ENCODE measurements at regions of chr2 and their contacts with region 1.

Region 1: DNA sequence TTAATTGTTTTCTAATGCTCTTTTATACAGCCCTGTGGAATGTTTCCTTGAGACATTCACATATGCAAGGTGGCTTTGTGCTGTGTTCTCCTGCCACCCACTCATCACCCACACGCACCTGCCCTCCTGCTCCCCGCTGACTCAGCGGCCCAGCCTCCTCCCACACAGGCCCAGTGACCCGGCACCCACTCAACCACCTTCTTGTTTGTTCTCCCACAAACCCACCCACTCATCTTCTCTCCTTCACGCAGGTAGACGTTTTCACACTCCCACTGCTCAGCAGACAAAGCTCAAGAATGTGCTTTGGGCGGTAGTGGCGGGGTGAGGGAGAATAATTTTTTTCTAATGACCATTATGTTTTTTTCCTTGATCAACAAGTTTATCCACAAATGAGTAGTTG is 28.6 kb upstream of the NEMP2 start:
- DNase-seq: no peak
- H3K4me3 ChIP-seq: no peak overlapping the region
- H3K27ac ChIP-seq: no peak overlapping the region
- H3K4me1 ChIP-seq: no peaks in the 10 kb centered on the region
- H3K27me3 ChIP-seq: no peaks in the 10 kb centered on the region
- CTCF ChIP-seq: no peak
- POLR2A ChIP-seq: no peak

Region 2: DNA sequence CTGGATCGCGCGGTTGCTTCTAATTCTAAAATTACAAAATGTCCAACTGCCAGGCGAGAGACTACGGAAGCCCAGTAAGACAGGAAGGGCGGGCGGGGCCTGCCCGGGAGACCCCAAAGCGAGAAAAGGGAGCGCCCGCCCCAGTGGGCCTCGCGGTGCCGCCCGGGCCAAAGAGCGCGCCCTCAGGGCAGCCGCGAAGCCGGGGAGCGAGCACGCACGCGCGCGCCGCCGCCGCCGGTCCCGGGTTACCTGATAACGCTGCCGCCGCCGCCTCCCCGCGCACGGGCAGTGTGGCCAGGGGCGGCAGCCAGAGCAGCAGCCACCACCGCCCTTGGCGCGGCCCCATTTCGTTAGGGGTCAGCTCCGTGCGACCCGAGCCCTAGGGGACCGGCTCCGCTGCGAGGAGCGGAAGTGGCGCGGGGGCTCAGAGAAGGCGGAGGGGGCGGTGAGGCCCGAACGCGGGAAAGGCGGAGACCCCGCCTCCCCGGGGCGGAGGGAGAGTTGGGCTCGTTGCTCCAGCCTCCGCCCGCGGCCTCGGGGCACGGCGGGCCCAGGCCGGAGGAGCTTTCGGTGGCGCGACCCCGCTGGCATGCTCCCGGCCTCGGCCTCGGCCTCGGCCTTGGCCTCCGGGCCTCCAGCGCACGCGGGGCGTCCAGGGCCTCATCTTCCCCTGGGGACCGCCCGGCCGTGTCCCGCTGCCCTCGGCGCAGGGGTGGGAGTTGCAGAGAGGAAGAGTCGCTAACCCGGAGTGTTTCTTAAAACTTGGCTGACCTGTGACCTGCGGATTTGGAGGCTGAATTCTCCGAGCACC is 28.6 kb before region 1 on chr2 and contains the start of gene NEMP2:
- intact Hi-C with region 1: no loop called
- DNase-seq: peak; percentile 49 to 57
- H3K4me3 ChIP-seq: peak within 1 kb of the TSS; percentile 61 to 81 (median 66)
- H3K27ac ChIP-seq: peak within 1 kb of the TSS; percentile 93 to 98
- H3K4me1 ChIP-seq: no peaks in the 10 kb centered on the region
- H3K27me3 ChIP-seq: no peaks in the 10 kb centered on the region
- CTCF ChIP-seq: no peak
- POLR2A ChIP-seq: peak; percentile 39
- total RNA-seq, gene NEMP2: 4.5 to 6.6 (median 5.2) TPM

Region 3: GRCh38 chr2:190545555-190546385 is 17.3 kb before region 1 on chr2:
- intact Hi-C with region 1: loop called (anchors 1 kb)
- DNase-seq: no peak
- H3K4me3 ChIP-seq: peak overlapping the region in 2 of 3 donors; percentile 30 to 47
- H3K27ac ChIP-seq: peak overlapping the region in 1 of 2 donors; percentile 5
- H3K4me1 ChIP-seq: no peaks in the 10 kb centered on the region
- H3K27me3 ChIP-seq: no peaks in the 10 kb centered on the region
- CTCF ChIP-seq: no peak
- POLR2A ChIP-seq: no peak